ENCODE measurements at regions of chr3 and their contacts with region 1.

Region 1: DNA sequence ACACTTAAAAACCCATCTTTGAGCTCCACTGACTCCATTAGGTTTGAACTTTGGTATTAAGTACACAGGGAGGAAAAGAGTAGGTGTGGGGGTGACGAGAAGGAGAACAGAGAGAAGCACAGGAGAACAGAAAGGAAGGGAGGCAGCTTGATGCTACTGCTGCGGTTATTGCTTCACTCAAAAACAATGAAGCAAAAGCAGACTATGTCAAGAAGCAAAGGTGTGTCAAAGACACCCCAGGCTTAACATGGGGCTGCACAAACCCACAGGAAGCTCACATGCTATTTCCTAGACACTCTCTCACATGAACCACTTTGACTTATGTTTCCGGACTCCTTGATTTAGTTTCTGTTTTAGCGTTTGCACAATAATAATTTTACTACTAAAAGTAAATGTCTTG is 961.0 kb upstream of the CFAP20DC start:
- DNase-seq: peak; percentile 79 to 86 (median 84)
- H3K4me3 ChIP-seq: peak overlapping the region; percentile 3 to 18
- H3K4me3 Mint-ChIP-seq: peak overlapping the region; percentile 67 to 88 (median 84)
- H3K27ac ChIP-seq: peak overlapping the region; percentile 47
- H3K27ac Mint-ChIP-seq: peak overlapping the region; percentile 91 to 99 (median 96)
- H3K4me1 ChIP-seq: peaks cover 95% of the 10 kb centered on the region
- H3K4me1 Mint-ChIP-seq: peaks cover 55 to 85% (median 73%) of the 10 kb centered on the region in 4 donors
- H3K27me3 ChIP-seq: no peaks in the 10 kb centered on the region
- H3K27me3 Mint-ChIP-seq: no peaks in the 10 kb centered on the region

Region 2: DNA sequence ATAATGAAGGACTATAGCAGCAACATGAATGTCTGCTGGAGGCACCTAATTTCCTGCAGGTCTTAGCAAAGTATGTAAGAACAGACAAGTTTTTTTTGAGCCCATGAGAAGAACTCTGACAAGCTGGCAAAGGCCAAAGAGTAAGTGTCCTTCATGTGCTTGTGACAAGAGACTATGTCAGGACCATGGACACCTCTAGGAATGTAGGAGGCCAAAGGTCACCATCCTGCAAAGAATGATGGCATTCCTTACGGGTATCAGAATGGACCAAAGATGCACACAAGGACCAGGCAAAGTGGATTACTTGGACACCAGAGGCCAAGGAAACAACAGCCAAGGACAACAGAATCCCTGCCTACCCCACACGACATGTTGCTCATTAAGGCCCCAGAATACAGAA is 102.5 kb before region 1 on chr3:
- CTCF ChIA-PET with region 1: no interaction called
- POLR2A ChIA-PET with region 1: no interaction called
- intact Hi-C with region 1: no loop called
- DNase-seq: no peak
- H3K4me3 ChIP-seq: no peak overlapping the region
- H3K4me3 Mint-ChIP-seq: no peak overlapping the region
- H3K27ac ChIP-seq: no peak overlapping the region
- H3K27ac Mint-ChIP-seq: peak overlapping the region in 1 of 7 donors; percentile 34
- H3K4me1 ChIP-seq: no peaks in the 10 kb centered on the region
- H3K4me1 Mint-ChIP-seq: peaks cover 0 to 16% (median 7%) of the 10 kb centered on the region in 4 donors
- H3K27me3 ChIP-seq: no peaks in the 10 kb centered on the region
- H3K27me3 Mint-ChIP-seq: no peaks in the 10 kb centered on the region

Region 3: GRCh38 chr3:59981377-59981776 is 29.4 kb before region 1 on chr3:
- CTCF ChIA-PET with region 1: no interaction called
- POLR2A ChIA-PET with region 1: interaction called, 11 read pairs
- intact Hi-C with region 1: no loop called
- DNase-seq: peak; percentile 28 to 42 (median 38)
- H3K4me3 ChIP-seq: no peak overlapping the region
- H3K4me3 Mint-ChIP-seq: peak overlapping the region in 7 of 8 donors; percentile 5 to 57 (median 47)
- H3K27ac ChIP-seq: no peak overlapping the region
- H3K27ac Mint-ChIP-seq: peak overlapping the region; percentile 3 to 86 (median 49)
- H3K4me1 ChIP-seq: peaks cover 53% of the 10 kb centered on the region
- H3K4me1 Mint-ChIP-seq: peaks cover 47 to 71% (median 59%) of the 10 kb centered on the region in 4 donors
- H3K27me3 ChIP-seq: no peaks in the 10 kb centered on the region
- H3K27me3 Mint-ChIP-seq: no peaks in the 10 kb centered on the region

Region 4: GRCh38 chr3:60025096-60026050 is 14.6 kb after region 1 on chr3:
- CTCF ChIA-PET with region 1: interaction called, 4 read pairs
- POLR2A ChIA-PET with region 1: interaction called, 16 read pairs
- intact Hi-C with region 1: no loop called
- DNase-seq: no peak
- H3K4me3 ChIP-seq: no peak overlapping the region
- H3K4me3 Mint-ChIP-seq: peak overlapping the region in 4 of 8 donors; percentile 9 to 79 (median 54)
- H3K27ac ChIP-seq: no peak overlapping the region
- H3K27ac Mint-ChIP-seq: peak overlapping the region in 6 of 7 donors; percentile 5 to 81 (median 64)
- H3K4me1 ChIP-seq: peaks cover 26% of the 10 kb centered on the region
- H3K4me1 Mint-ChIP-seq: peaks cover 36 to 72% (median 48%) of the 10 kb centered on the region in 4 donors
- H3K27me3 ChIP-seq: no peaks in the 10 kb centered on the region
- H3K27me3 Mint-ChIP-seq: no peaks in the 10 kb centered on the region

Region 5: GRCh38 chr3:60053526-60054265 is 42.9 kb after region 1 on chr3:
- CTCF ChIA-PET with region 1: interaction called, 3 read pairs
- POLR2A ChIA-PET with region 1: interaction called, 24 read pairs
- intact Hi-C with region 1: loop called (anchors 1 kb)
- DNase-seq: peak in 1 of 5 donors; percentile 64
- H3K4me3 ChIP-seq: no peak overlapping the region
- H3K4me3 Mint-ChIP-seq: peak overlapping the region in 5 of 8 donors; percentile 10 to 60 (median 55)
- H3K27ac ChIP-seq: no peak overlapping the region
- H3K27ac Mint-ChIP-seq: peak overlapping the region in 6 of 7 donors; percentile 10 to 81 (median 18)
- H3K4me1 ChIP-seq: peaks cover 64% of the 10 kb centered on the region
- H3K4me1 Mint-ChIP-seq: peaks cover 35 to 63% (median 50%) of the 10 kb centered on the region in 4 donors
- H3K27me3 ChIP-seq: no peaks in the 10 kb centered on the region
- H3K27me3 Mint-ChIP-seq: no peaks in the 10 kb centered on the region

Region 6: DNA sequence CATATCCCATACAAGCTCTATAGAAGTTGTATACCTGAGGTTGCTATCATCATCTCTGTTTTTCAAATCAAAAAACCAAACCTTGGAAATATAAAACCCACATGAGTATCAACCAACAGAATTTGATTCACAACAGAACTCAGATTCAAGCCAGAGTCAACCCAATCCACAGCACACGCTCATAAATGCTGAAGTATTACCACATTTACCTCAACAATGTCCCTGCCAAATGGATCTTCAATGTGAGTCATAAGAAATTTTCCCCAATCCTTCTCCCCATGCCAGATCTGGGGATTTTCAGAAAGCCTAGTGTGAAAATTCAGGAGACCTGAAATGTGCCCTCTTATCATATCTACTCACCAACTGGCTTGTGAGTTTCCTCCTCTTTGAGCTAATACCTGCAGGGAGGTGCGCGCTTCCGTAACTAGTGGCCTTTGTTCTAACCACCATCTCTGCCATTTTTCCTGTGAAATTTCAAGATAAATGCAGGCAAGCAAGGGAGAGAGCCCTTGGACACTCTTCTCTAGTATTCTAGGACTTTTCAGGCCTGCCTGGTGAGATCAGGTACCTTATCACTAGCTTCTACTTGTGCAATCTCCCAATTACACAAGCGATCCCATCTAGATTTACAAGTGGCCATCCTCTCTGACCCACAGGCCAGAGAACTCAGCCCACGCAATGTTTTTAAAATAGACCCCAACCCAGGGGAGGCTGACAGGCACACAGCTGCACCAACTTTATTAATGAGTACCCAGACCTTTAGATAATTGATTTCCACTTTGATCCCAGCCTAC is 115.9 kb after region 1 on chr3:
- CTCF ChIA-PET with region 1: no interaction called
- POLR2A ChIA-PET with region 1: no interaction called
- intact Hi-C with region 1: no loop called
- DNase-seq: no peak
- H3K4me3 ChIP-seq: no peak overlapping the region
- H3K4me3 Mint-ChIP-seq: no peak overlapping the region
- H3K27ac ChIP-seq: no peak overlapping the region
- H3K27ac Mint-ChIP-seq: peak overlapping the region in 1 of 7 donors; percentile 43
- H3K4me1 ChIP-seq: no peaks in the 10 kb centered on the region
- H3K4me1 Mint-ChIP-seq: no peaks in the 10 kb centered on the region
- H3K27me3 ChIP-seq: no peaks in the 10 kb centered on the region
- H3K27me3 Mint-ChIP-seq: no peaks in the 10 kb centered on the region

Region 7: GRCh38 chr3:60160111-60160821 is 149.5 kb after region 1 on chr3:
- CTCF ChIA-PET with region 1: no interaction called
- POLR2A ChIA-PET with region 1: no interaction called
- intact Hi-C with region 1: no loop called
- DNase-seq: no peak
- H3K4me3 ChIP-seq: no peak overlapping the region
- H3K4me3 Mint-ChIP-seq: no peak overlapping the region
- H3K27ac ChIP-seq: no peak overlapping the region
- H3K27ac Mint-ChIP-seq: peak overlapping the region in 1 of 7 donors; percentile 42
- H3K4me1 ChIP-seq: no peaks in the 10 kb centered on the region
- H3K4me1 Mint-ChIP-seq: peaks cover 3 to 9% (median 4%) of the 10 kb centered on the region in 4 donors
- H3K27me3 ChIP-seq: no peaks in the 10 kb centered on the region
- H3K27me3 Mint-ChIP-seq: no peaks in the 10 kb centered on the region

Measured in CD4-positive, alpha-beta memory T cell (primary cell).